Heart left ventricle (tissue), 16 donors: ENCODE measurements at regions of chr16 and their contacts with region 1.

Region 1: DNA sequence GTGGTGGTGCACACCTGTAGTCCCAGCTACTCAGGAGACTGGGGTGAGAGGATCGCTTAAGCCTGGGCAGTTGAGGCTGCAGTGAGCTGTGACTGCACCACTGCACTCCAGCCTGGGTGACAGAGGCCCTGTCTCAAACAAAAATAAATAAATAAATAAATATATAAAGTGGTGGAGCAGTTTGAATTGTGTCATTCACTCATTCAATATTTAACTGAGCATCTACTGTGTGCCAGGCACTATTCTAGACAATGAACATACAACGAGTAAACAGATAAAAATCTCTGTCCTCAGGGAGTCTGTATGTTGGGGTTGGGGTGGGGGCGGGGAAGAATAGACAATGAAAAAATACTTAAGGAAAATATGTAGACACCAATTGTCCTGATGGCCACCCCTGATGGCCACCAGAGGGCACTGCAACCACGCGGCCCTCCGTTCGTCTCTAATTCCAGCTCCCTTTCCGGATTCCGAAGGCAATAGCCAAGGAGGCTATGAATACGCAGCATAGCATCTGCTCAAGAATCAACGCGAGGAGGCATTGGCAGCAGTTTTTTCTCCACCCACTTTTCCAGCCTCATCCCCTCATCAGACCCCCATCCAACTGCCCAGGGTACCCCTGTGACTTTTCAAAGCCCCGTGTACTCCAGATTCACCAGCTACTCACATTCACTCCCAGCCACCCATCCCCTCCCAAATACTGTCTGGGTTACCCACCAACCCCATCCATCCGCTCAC is 21.4 kb downstream of the QPRT start:
- DNase-seq: peak; percentile 68 to 85 (median 74)
- ATAC-seq: peak; percentile 58 to 88 (median 85)
- H3K4me3 ChIP-seq: no peak overlapping the region
- H3K27ac ChIP-seq: no peak overlapping the region
- H3K4me1 ChIP-seq: peaks cover 0 to 7% (median 0%) of the 10 kb centered on the region in 12 donors
- H3K27me3 ChIP-seq: no peaks in the 10 kb centered on the region
- CTCF ChIP-seq: peak; percentile 86 to 94 (median 88)
- POLR2A ChIP-seq: no peak

Region 2: DNA sequence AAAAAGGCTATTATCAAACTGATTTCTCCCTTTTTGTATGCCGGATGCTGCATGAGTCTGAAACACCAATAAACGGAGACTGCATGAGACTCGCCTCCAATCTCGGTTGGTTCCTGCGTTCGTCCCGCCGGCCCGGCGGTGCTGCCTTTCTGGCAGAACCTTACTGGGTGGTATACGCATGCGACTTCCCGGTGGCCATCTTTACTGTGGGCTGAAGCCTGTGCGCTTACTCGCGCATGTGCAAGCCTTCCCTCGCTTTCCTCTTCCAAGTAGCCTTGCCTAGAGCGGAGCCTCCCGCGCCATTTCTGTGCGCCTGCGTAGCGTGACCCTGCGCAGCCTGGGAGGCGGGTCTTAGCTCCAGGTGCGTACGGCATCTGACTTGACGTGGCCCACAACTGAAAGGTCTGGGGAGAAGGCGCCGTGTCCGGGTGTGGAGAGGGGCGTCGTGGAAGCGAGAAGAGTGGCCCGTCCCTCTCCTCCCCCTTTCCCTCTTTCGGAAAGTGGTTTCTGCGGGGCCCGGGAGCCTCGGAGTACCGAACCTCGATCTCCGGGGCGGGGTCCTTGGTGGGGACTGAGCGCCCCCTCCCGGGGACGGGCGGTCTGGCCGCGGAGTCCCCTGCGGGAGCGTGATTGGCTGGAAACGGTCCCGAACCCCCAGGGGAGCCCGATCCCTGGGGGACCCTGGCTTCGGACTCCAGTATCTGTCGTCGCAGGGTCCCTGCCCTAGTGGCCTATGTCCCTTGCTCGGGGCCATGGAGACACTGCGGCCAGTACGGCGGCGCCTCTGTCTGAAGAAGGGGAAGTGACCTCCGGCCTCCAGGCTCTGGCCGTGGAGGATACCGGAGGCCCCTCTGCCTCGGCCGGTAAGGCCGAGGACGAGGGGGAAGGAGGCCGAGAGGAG is 115.6 kb after region 1 on chr16 and contains the start of gene PAGR1:
- intact Hi-C with region 1: loop called in 1 of 10 experiments (anchors 10 kb)
- DNase-seq: peak; percentile 97 to 99 (median 99)
- ATAC-seq: peak; percentile 80 to 89 (median 86)
- H3K4me3 ChIP-seq: peak within 1 kb of the TSS; percentile 45 to 91 (median 74)
- H3K27ac ChIP-seq: peak within 1 kb of the TSS; percentile 84 to 97 (median 93)
- H3K4me1 ChIP-seq: peaks cover 3 to 71% (median 51%) of the 10 kb centered on the region in 12 donors
- H3K27me3 ChIP-seq: peaks cover 0 to 4% (median 0%) of the 10 kb centered on the region in 9 donors
- CTCF ChIP-seq: peak; percentile 82 to 98 (median 91)
- POLR2A ChIP-seq: peak in 1 of 2 donors; percentile 60
- total RNA-seq, gene PAGR1: 10.8 to 23.9 (median 12.6) TPM

Region 3: GRCh38 chr16:30005341-30006094 is 305.1 kb after region 1 on chr16:
- intact Hi-C with region 1: loop called in 1 of 10 experiments (anchors 5 kb)
- DNase-seq: peak in 2 of 5 donors; percentile 22 to 64
- ATAC-seq: peak in 3 of 4 donors; percentile 29 to 66 (median 62)
- H3K4me3 ChIP-seq: no peak overlapping the region
- H3K27ac ChIP-seq: no peak overlapping the region
- H3K4me1 ChIP-seq: peaks cover 0 to 14% (median 3%) of the 10 kb centered on the region in 12 donors
- H3K27me3 ChIP-seq: peaks cover 7 to 25% (median 18%) of the 10 kb centered on the region in 9 donors
- CTCF ChIP-seq: peak; percentile 73 to 89 (median 84)
- POLR2A ChIP-seq: peak in 1 of 2 donors; percentile 9

Region 4: DNA sequence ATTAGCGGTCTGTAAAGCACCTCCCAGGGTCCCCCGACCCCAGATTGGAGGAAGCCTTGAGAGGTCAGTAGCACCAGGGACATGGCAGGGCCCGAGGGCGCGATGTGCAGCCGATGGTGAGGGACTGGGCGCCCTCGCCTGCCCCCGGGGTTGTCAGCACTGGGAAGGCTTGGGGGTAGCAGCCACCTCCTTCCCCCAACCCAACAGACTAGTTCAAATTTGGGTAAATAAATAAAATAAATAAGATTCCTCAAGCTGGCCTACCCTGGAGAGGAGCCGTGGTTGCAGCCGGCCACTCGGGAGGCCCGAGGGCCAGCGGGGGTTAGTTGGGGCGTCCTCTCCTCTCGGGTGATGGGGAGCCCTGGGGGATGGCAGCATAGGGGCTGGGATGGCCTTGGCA is 324.0 kb after region 1 on chr16:
- intact Hi-C with region 1: loop called (anchors 1 to 10 kb)
- DNase-seq: no peak
- ATAC-seq: no peak
- H3K4me3 ChIP-seq: no peak overlapping the region
- H3K27ac ChIP-seq: no peak overlapping the region
- H3K4me1 ChIP-seq: peaks cover 0 to 13% (median 4%) of the 10 kb centered on the region in 12 donors
- H3K27me3 ChIP-seq: peaks cover 0 to 38% (median 14%) of the 10 kb centered on the region in 9 donors
- CTCF ChIP-seq: no peak
- POLR2A ChIP-seq: no peak